ENCODE measurements at regions of chr3 and their contacts with region 1.

Region 1: GRCh38 chr3:114336122-114336697 is 42.4 kb downstream of the TIGIT start:
- DNase-seq: no peak
- ATAC-seq: no peak
- H3K4me3 Mint-ChIP-seq: no peak overlapping the region
- H3K27ac Mint-ChIP-seq: peak overlapping the region; percentile 59
- H3K4me1 Mint-ChIP-seq: peaks cover 43% of the 10 kb centered on the region
- H3K27me3 Mint-ChIP-seq: no peaks in the 10 kb centered on the region
- CTCF ChIP-seq: no peak

Region 2: DNA sequence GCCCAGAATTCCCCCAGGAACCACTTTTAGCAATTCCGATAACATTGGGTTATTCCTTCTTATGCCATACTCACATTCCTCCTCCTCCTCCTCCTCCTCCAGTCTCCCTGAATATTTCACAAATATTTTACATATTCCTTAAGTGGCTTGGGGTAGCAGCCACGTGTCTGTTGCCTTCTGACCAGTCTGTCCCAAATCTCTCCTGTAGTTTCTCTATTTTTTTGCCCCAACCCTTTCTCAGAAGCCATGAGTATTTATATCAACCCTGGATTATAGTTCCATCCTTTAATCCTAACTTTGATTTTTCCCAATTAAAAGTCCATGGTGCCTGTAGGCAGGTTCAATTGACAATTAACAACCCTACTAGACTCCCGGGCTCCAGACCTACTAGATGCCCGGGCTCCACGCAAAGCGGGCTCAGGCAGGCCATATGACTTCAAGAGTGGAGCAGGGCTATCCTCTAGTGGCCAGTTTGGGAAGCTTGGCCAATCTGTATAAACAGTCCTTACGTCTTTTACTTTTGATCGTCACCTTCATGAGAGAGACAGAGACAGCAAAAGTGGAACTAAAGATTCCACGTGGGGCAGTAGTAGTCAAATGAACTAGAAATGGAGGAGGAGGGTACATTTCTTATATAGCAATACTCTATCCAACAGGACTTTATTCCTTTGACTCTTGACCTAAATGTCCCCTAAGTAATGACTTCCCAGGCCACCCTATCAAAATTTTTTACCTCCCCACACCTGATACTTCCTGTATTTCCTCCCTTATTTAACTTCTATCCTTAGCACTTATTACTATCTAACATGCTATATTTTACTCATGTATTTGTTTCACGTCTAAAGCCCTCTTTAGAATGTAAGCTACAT is 709.5 kb before region 1 on chr3:
- CTCF ChIA-PET with region 1: no interaction called
- POLR2A ChIA-PET with region 1: no interaction called
- intact Hi-C with region 1: no loop called
- DNase-seq: no peak
- ATAC-seq: peak; percentile 90
- H3K4me3 Mint-ChIP-seq: peak overlapping the region; percentile 84
- H3K27ac Mint-ChIP-seq: peak overlapping the region; percentile 87
- H3K4me1 Mint-ChIP-seq: peaks cover 57% of the 10 kb centered on the region
- H3K27me3 Mint-ChIP-seq: no peaks in the 10 kb centered on the region
- CTCF ChIP-seq: no peak

Region 3: GRCh38 chr3:114308830-114309229 is 27.4 kb before region 1 on chr3:
- CTCF ChIA-PET with region 1: interaction called, 4 read pairs
- POLR2A ChIA-PET with region 1: interaction called, 6 read pairs
- intact Hi-C with region 1: loop called (anchors 2 kb)
- DNase-seq: no peak
- ATAC-seq: peak; percentile 87
- H3K4me3 Mint-ChIP-seq: peak overlapping the region; percentile 6
- H3K27ac Mint-ChIP-seq: peak overlapping the region; percentile 89
- H3K4me1 Mint-ChIP-seq: peaks cover 51% of the 10 kb centered on the region
- H3K27me3 Mint-ChIP-seq: no peaks in the 10 kb centered on the region
- CTCF ChIP-seq: no peak